Transverse colon (tissue), 4 donors: ENCODE measurements at regions of chr10 and their contacts with region 1.

Region 1: GRCh38 chr10:52198540-52198939 is 115.5 kb upstream of the DKK1 start:
- DNase-seq: no peak
- H3K4me3 ChIP-seq: no peak overlapping the region
- H3K27ac ChIP-seq: no peak overlapping the region
- H3K4me1 ChIP-seq: no peaks in the 10 kb centered on the region
- H3K27me3 ChIP-seq: no peaks in the 10 kb centered on the region
- CTCF ChIP-seq: no peak
- EP300 ChIP-seq: no peak
- POLR2A ChIP-seq: no peak

Region 2: GRCh38 chr10:50417886-50418830 is 1780.4 kb before region 1 on chr10:
- in situ Hi-C with region 1: no loop called
- intact Hi-C with region 1: loop called (anchors 5 kb)
- DNase-seq: peak; percentile 63
- H3K4me3 ChIP-seq: peak overlapping the region; percentile 47 to 79 (median 75)
- H3K27ac ChIP-seq: peak overlapping the region; percentile 72 to 87 (median 80)
- H3K4me1 ChIP-seq: peaks cover 0 to 24% (median 8%) of the 10 kb centered on the region in 4 donors
- H3K27me3 ChIP-seq: no peaks in the 10 kb centered on the region
- CTCF ChIP-seq: peak in 1 of 5 experiments; percentile 4
- EP300 ChIP-seq: no peak
- POLR2A ChIP-seq: no peak